ENCODE measurements at regions of chr14 and their contacts with region 1.

Region 1: DNA sequence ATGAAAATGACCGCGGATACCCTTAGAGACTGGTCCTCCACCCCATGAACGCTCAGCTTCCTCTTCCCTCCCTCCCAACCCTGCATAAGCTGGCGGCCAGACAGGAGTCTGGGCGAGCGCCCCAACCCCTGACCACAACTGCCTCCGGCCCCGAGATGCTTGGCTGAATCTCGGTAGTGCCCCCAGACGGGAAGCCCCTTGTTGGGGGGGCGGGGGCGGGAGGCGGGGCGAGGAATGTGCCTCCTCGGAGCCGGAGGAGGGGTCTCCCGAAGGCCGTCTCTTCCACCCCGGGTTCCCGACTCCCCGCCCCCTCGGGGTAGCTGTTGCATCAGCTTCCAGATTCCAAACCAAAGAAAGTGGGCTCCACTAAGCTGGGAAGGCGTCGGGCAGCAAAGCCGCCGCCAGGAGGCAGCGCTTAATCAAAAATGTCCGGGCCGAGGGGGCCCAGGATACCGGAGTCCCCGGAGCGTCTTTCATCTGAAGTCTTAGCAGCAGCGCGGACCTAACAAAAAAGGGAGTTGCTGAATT is 7.1 kb upstream of the MRPL52 start:
- DNase-seq: no peak
- ATAC-seq: peak; percentile 78
- H3K4me3 ChIP-seq: peak overlapping the region; percentile 74
- H3K27ac ChIP-seq: peak overlapping the region; percentile 48
- H3K4me1 ChIP-seq: peaks cover 34% of the 10 kb centered on the region
- H3K27me3 ChIP-seq: no peaks in the 10 kb centered on the region
- CTCF ChIP-seq: peak; percentile 73 to 77 (median 76)
- EP300 ChIP-seq: 0 out of 4 replicates have a peak, but pooled peaks of 1 of the 2 experiments have one; percentile 25
- POLR2A ChIP-seq: no peak; the same call in 1 of the 2 replicates
- RAD21 ChIP-seq: peak; percentile 86

Region 2: GRCh38 chr14:22781586-22781991 is 41.0 kb before region 1 on chr14:
- CTCF ChIA-PET with region 1: interaction called, 12 read pairs
- POLR2A ChIA-PET with region 1: interaction called, 3 read pairs
- RAD21 ChIA-PET with region 1: interaction called, 11 read pairs
- SMC1A ChIA-PET with region 1: interaction called, 13 read pairs
- in situ Hi-C with region 1: no loop called
- intact Hi-C with region 1: loop called (anchors 1 kb)
- DNase-seq: no peak
- ATAC-seq: no peak
- H3K4me3 ChIP-seq: no peak overlapping the region
- H3K27ac ChIP-seq: no peak overlapping the region
- H3K4me1 ChIP-seq: peaks cover 13% of the 10 kb centered on the region
- H3K27me3 ChIP-seq: no peaks in the 10 kb centered on the region
- CTCF ChIP-seq: no peak
- EP300 ChIP-seq: no peak
- POLR2A ChIP-seq: no peak
- RAD21 ChIP-seq: no peak

Region 3: DNA sequence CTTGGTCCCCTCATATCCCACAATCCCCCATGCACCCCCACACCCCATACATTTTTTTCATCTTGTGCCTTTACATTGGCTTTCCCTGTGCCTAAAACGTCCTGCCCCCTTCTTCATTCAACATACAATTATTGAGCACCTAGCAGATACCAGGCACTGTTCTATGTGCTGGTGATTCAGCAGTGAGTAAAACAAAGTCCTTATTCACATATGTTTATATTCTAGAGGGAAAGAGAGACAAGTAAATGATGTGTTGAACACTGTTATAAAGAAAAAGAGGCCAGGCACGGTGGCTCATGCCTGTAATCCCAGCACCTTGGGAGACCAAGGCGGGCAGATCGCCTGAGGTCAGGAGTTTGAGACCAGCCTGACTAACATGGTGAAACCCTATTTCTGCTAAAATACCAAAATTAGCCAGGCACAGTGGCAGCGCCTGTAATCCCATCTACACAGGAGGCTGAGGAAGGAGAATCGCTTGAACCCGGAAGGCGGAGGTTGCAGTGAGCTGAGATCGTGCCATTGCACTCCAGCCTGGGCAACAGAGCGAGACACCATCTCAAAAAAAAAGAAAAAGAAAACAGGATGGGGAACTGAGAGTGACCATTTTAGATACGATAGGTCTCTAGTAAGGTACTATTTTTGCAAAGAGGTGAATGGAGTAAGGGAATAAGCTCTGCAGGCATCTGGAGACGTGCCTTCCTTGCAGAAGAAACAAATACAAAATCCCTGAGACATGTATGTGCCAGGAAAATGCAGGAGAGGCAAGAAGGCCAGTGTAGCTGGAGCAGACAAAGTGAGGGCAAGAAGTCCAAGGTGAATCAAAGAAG is 19.6 kb before region 1 on chr14:
- CTCF ChIA-PET with region 1: interaction called, 36 read pairs
- POLR2A ChIA-PET with region 1: interaction called, 43 read pairs
- RAD21 ChIA-PET with region 1: interaction called, 30 read pairs
- SMC1A ChIA-PET with region 1: interaction called, 38 read pairs
- in situ Hi-C with region 1: no loop called
- intact Hi-C with region 1: no loop called
- DNase-seq: no peak
- ATAC-seq: peak; percentile 80
- H3K4me3 ChIP-seq: peak overlapping the region; percentile 61
- H3K27ac ChIP-seq: peak overlapping the region; percentile 98
- H3K4me1 ChIP-seq: peaks cover 58% of the 10 kb centered on the region
- H3K27me3 ChIP-seq: no peaks in the 10 kb centered on the region
- CTCF ChIP-seq: no peak
- EP300 ChIP-seq: 0 out of 4 replicates have a peak, but pooled peaks of 1 of the 2 experiments have one; percentile 11
- POLR2A ChIP-seq: no peak
- RAD21 ChIP-seq: no peak

Region 4: DNA sequence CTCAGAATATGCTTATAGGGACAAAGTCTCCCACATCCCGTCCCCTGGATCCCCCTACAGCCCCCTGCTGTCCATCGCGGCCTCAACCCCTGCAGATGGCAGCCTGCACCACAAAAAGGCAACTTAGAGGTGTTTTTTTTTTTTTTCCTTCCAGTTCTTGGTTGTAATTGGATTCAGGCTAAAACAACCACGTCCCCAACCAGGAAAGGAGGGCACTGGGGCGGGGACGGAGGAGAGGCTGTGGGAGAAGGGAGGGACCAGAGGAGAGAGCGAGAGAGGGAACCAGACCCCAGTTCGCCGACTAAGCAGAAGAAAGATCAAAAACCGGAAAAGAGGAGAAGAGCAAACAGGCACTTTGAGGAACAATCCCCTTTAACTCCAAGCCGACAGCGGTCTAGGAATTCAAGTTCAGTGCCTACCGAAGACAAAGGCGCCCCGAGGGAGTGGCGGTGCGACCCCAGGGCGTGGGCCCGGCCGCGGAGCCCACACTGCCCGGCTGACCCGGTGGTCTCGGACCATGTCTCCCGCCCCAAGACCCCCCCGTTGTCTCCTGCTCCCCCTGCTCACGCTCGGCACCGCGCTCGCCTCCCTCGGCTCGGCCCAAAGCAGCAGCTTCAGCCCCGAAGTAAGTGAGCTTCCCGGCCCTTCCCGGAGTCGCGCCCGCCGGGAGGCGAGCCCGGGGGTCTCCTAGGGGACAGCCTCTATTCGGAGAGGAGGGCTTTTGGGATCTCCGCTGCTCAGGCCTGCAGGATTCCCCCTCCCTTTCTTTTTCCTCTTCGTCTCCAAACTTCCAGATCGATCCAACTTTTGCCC is 13.9 kb after region 1 on chr14 and contains the start of gene MMP14:
- CTCF ChIA-PET with region 1: interaction called, 18 read pairs
- POLR2A ChIA-PET with region 1: interaction called, 5 read pairs
- RAD21 ChIA-PET with region 1: interaction called, 10 read pairs
- SMC1A ChIA-PET with region 1: interaction called, 19 read pairs
- in situ Hi-C with region 1: no loop called
- intact Hi-C with region 1: no loop called
- DNase-seq: no peak
- ATAC-seq: no peak
- H3K4me3 ChIP-seq: no peak within 1 kb of the TSS
- H3K27ac ChIP-seq: no peak within 1 kb of the TSS
- H3K4me1 ChIP-seq: peaks cover 21% of the 10 kb centered on the region
- H3K27me3 ChIP-seq: no peaks in the 10 kb centered on the region
- CTCF ChIP-seq: no peak
- EP300 ChIP-seq: no peak
- POLR2A ChIP-seq: 0 out of 2 replicates have a peak, but pooled peaks have one; percentile 23
- RAD21 ChIP-seq: no peak
- polyA plus RNA-seq, gene MMP14: not detected

Region 5: GRCh38 chr14:22900081-22900799 is 77.6 kb after region 1 on chr14:
- CTCF ChIA-PET with region 1: interaction called, 10 read pairs
- POLR2A ChIA-PET with region 1: no interaction called
- RAD21 ChIA-PET with region 1: interaction called, 12 read pairs
- SMC1A ChIA-PET with region 1: interaction called, 6 read pairs
- in situ Hi-C with region 1: no loop called
- intact Hi-C with region 1: loop called (anchors 1 kb)
- DNase-seq: peak; percentile 47
- ATAC-seq: peak; percentile 95
- H3K4me3 ChIP-seq: no peak overlapping the region
- H3K27ac ChIP-seq: no peak overlapping the region
- H3K4me1 ChIP-seq: no peaks in the 10 kb centered on the region
- H3K27me3 ChIP-seq: no peaks in the 10 kb centered on the region
- CTCF ChIP-seq: peak; percentile 65 to 76 (median 69)
- EP300 ChIP-seq: no peak
- POLR2A ChIP-seq: no peak
- RAD21 ChIP-seq: peak; percentile 89